ENCODE measurements at regions of chr13 and their contacts with region 1.

Region 1: GRCh38 chr13:51452361-51453206 is at the start of gene INTS6:
- DNase-seq: peak; percentile 73 to 100 (median 99)
- ATAC-seq: peak; percentile 83
- H3K4me3 ChIP-seq: peak within 1 kb of the TSS; percentile 88
- H3K4me3 Mint-ChIP-seq: peak within 1 kb of the TSS; percentile 96
- H3K27ac ChIP-seq: peak within 1 kb of the TSS; percentile 88 to 97
- H3K27ac Mint-ChIP-seq: peak within 1 kb of the TSS; percentile 95
- H3K4me1 ChIP-seq: peaks cover 30% of the 10 kb centered on the region
- H3K4me1 Mint-ChIP-seq: peaks cover 59% of the 10 kb centered on the region
- H3K27me3 ChIP-seq: no peaks in the 10 kb centered on the region
- H3K27me3 Mint-ChIP-seq: no peaks in the 10 kb centered on the region
- CTCF ChIP-seq: no peak
- total RNA-seq, gene INTS6: 40.8 to 45.8 TPM

Region 2: GRCh38 chr13:49996951-49997895 is 1455.4 kb before region 1 on chr13 and contains the start of gene TRIM13:
- CTCF ChIA-PET with region 1: no interaction called
- POLR2A ChIA-PET with region 1: interaction called, 3 read pairs
- intact Hi-C with region 1: loop called in 1 of 2 experiments (anchors 10 kb)
- DNase-seq: peak; percentile 72 to 91 (median 80)
- ATAC-seq: peak; percentile 83
- H3K4me3 ChIP-seq: peak within 1 kb of the TSS; percentile 96
- H3K4me3 Mint-ChIP-seq: peak within 1 kb of the TSS; percentile 97
- H3K27ac ChIP-seq: peak within 1 kb of the TSS; percentile 91
- H3K27ac Mint-ChIP-seq: peak within 1 kb of the TSS; percentile 90
- H3K4me1 ChIP-seq: peaks cover 32% of the 10 kb centered on the region
- H3K4me1 Mint-ChIP-seq: peaks cover 56% of the 10 kb centered on the region
- H3K27me3 ChIP-seq: no peaks in the 10 kb centered on the region
- H3K27me3 Mint-ChIP-seq: no peaks in the 10 kb centered on the region
- CTCF ChIP-seq: peak; percentile 95
- total RNA-seq, gene TRIM13: 32.5 to 32.9 TPM

Region 3: DNA sequence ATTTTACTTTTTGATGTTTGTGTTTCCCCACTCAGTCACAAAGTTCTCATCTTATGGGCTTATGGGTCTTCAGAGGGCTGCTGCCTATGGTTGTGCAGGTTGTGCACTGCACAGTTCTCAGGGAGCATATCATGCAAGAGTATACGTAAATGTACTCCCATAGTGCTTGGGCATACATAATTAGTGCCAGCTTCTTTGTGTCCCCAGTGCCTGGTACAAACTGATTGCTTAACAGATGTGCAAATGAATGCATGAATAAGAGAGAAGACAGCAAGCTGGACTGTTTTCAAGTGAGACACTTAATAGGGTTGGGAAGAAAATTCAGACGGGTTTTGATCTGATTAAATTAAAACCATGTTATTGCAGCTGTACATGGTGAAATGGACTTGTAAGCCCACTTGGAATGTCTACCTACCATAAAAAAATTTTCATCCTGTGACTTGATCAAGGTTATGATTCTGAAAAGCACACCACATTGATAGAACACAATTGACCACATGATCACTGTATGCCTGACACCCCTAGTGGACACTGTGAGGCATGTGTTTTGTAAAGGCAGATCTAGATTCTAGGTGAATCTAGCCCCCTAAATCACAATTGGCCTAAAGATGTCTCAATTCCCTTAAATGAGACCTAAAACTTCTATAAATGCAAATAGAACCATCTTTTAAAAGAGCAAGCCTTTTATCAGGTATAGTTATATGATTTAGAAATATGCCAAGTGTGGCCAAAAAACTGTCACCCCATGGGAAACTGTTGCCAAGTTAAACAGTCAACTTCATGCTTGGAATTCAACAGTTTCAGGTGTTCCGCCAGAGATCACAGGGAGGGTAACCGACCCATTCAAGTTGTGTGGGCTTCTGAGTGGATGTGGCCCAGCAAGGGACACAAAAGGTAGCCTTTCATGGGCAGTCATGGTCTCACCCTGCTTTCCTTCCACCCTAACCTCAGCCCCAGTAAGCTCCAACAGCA is 202.5 kb before region 1 on chr13:
- CTCF ChIA-PET with region 1: no interaction called
- POLR2A ChIA-PET with region 1: no interaction called
- intact Hi-C with region 1: no loop called
- DNase-seq: no peak
- ATAC-seq: no peak
- H3K4me3 ChIP-seq: no peak overlapping the region
- H3K4me3 Mint-ChIP-seq: no peak overlapping the region
- H3K27ac ChIP-seq: no peak overlapping the region
- H3K27ac Mint-ChIP-seq: no peak overlapping the region
- H3K4me1 ChIP-seq: no peaks in the 10 kb centered on the region
- H3K4me1 Mint-ChIP-seq: no peaks in the 10 kb centered on the region
- H3K27me3 ChIP-seq: peaks cover 0 to 5% of the 10 kb centered on the region in 2 experiments
- H3K27me3 Mint-ChIP-seq: no peaks in the 10 kb centered on the region
- CTCF ChIP-seq: no peak

Region 4: DNA sequence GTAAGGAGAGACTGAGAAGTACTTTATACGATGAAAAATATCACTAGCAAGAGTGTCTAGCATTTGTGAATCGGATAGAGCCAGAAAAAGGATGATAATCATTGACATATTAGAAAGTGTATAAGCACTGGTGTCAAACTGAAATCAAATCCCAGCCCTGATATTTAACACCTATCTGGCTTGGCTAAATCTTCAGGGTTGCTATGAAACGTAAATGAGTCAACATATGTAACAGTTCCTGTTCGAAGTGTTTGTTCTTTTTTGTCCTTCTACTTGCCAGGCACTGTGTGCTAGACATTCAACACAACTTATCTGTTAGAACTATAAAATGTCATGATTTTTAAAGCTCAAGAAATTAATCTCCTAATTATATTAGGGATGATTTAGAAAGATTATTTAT is 72.3 kb before region 1 on chr13:
- CTCF ChIA-PET with region 1: no interaction called
- POLR2A ChIA-PET with region 1: no interaction called
- intact Hi-C with region 1: no loop called
- DNase-seq: no peak
- ATAC-seq: no peak
- H3K4me3 ChIP-seq: no peak overlapping the region
- H3K4me3 Mint-ChIP-seq: no peak overlapping the region
- H3K27ac ChIP-seq: no peak overlapping the region
- H3K27ac Mint-ChIP-seq: no peak overlapping the region
- H3K4me1 ChIP-seq: no peaks in the 10 kb centered on the region
- H3K4me1 Mint-ChIP-seq: no peaks in the 10 kb centered on the region
- H3K27me3 ChIP-seq: no peaks in the 10 kb centered on the region
- H3K27me3 Mint-ChIP-seq: no peaks in the 10 kb centered on the region
- CTCF ChIP-seq: no peak

Region 5: GRCh38 chr13:51435002-51435578 is 17.5 kb before region 1 on chr13:
- CTCF ChIA-PET with region 1: interaction called, 4 read pairs
- POLR2A ChIA-PET with region 1: interaction called, 56 read pairs
- intact Hi-C with region 1: no loop called
- DNase-seq: peak in 3 of 14 experiments; percentile 47 to 58 (median 54)
- ATAC-seq: peak; percentile 56
- H3K4me3 ChIP-seq: no peak overlapping the region
- H3K4me3 Mint-ChIP-seq: no peak overlapping the region
- H3K27ac ChIP-seq: no peak overlapping the region
- H3K27ac Mint-ChIP-seq: no peak overlapping the region
- H3K4me1 ChIP-seq: no peaks in the 10 kb centered on the region
- H3K4me1 Mint-ChIP-seq: peaks cover 45% of the 10 kb centered on the region
- H3K27me3 ChIP-seq: no peaks in the 10 kb centered on the region
- H3K27me3 Mint-ChIP-seq: no peaks in the 10 kb centered on the region
- CTCF ChIP-seq: peak; percentile 67

Region 6: DNA sequence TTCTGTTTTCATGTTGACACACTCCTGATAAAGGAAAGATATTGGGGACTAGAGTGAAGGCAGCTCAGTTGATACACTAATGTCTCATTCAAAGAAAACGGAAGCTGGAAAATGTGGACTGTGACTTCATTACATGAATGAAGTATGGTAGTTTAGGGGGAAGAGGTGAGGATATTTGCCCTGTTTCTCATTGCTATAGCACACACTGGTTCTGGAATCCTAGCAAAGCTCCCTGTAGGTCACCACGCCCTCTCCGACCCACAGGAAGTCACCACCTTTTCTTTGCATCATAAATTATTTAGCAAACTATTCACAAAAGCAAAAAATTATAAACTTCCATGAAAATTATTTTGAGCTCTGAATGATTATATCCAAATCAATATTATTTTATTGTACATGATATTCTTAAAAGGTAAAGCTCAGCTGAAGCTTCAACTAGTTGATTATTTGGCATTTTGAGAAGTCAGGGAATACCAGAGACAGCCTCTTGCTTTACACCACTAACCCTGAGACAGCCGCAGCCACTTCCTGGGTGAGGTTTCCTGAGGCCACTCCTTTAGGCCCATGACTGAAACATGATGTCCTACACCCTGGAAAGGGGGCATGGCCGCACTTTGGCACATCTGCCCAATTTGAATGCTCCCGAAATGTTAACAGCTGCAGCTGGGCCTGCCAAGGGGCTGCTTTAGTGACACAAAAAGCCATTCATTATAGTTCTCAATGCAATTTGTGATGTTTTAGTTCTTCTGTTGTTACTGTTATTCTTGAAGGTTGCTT is 81.6 kb after region 1 on chr13:
- CTCF ChIA-PET with region 1: no interaction called
- POLR2A ChIA-PET with region 1: interaction called, 43 read pairs
- intact Hi-C with region 1: no loop called
- DNase-seq: peak in 13 of 14 experiments; percentile 3 to 78 (median 27)
- ATAC-seq: peak; percentile 55
- H3K4me3 ChIP-seq: no peak overlapping the region
- H3K4me3 Mint-ChIP-seq: peak overlapping the region; percentile 61
- H3K27ac ChIP-seq: peak overlapping the region in 1 of 2 donors; percentile 25
- H3K27ac Mint-ChIP-seq: peak overlapping the region; percentile 81
- H3K4me1 ChIP-seq: peaks cover 21% of the 10 kb centered on the region
- H3K4me1 Mint-ChIP-seq: peaks cover 28% of the 10 kb centered on the region
- H3K27me3 ChIP-seq: no peaks in the 10 kb centered on the region
- H3K27me3 Mint-ChIP-seq: no peaks in the 10 kb centered on the region
- CTCF ChIP-seq: no peak

Region 7: GRCh38 chr13:51645154-51645650 is 192.6 kb after region 1 on chr13:
- CTCF ChIA-PET with region 1: no interaction called
- POLR2A ChIA-PET with region 1: interaction called, 33 read pairs
- intact Hi-C with region 1: loop called in 1 of 2 experiments (anchors 2 kb)
- DNase-seq: peak in 6 of 14 experiments; percentile 17 to 87 (median 68)
- ATAC-seq: peak; percentile 87
- H3K4me3 ChIP-seq: peak overlapping the region; percentile 12
- H3K4me3 Mint-ChIP-seq: peak overlapping the region; percentile 82
- H3K27ac ChIP-seq: peak overlapping the region; percentile 54 to 95
- H3K27ac Mint-ChIP-seq: peak overlapping the region; percentile 95
- H3K4me1 ChIP-seq: peaks cover 44% of the 10 kb centered on the region
- H3K4me1 Mint-ChIP-seq: peaks cover 55% of the 10 kb centered on the region
- H3K27me3 ChIP-seq: no peaks in the 10 kb centered on the region
- H3K27me3 Mint-ChIP-seq: no peaks in the 10 kb centered on the region
- CTCF ChIP-seq: no peak

Region 8: GRCh38 chr13:51814825-51815650 is 362.5 kb after region 1 on chr13:
- CTCF ChIA-PET with region 1: interaction called, 4 read pairs
- POLR2A ChIA-PET with region 1: interaction called, 153 read pairs
- intact Hi-C with region 1: no loop called
- DNase-seq: peak; percentile 56 to 88 (median 68)
- ATAC-seq: peak; percentile 80
- H3K4me3 ChIP-seq: peak overlapping the region; percentile 13
- H3K4me3 Mint-ChIP-seq: peak overlapping the region; percentile 77
- H3K27ac ChIP-seq: peak overlapping the region in 1 of 2 donors; percentile 23
- H3K27ac Mint-ChIP-seq: peak overlapping the region; percentile 89
- H3K4me1 ChIP-seq: peaks cover 79% of the 10 kb centered on the region
- H3K4me1 Mint-ChIP-seq: peaks cover 84% of the 10 kb centered on the region
- H3K27me3 ChIP-seq: no peaks in the 10 kb centered on the region
- H3K27me3 Mint-ChIP-seq: no peaks in the 10 kb centered on the region
- CTCF ChIP-seq: peak; percentile 89

Region 9: DNA sequence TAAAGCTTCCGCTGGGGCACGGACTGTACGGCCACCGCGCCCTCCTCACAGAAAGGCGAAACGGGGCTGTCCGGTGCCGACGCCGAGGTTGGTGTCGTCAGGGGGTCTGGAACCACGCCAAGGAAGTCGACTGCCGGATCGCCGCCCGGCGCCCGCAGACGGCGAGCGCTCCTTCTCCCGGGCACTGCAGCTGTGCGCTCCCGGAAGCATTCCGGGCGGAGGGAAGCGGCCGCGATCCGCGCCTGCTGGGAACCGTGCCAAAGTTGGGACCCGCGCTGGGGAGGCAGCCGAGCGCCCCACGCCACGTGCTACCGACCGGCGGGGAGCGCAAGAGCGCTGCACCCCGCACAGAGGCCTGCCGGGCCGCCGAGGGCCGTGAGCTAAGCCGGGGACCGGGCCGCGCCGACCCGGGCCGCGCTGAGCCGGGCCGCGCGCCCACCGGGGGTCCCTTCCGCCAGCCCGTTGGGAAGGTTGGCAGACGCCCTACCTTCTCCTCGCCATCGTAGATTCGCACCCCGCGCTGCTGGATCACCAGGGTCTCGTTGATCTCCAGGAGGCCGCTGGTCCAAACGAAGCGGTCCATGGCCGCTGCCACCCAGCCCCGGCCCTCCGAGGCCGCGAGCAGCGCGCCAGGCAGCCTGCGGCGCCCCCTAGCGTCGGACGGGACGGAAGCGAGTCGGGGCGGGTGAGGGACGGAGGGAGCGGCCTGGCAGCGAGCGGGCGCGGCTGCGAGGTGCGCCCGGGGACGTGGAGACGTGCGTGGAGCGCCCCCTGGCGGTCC is 997.6 kb after region 1 on chr13 and contains the start of gene VPS36:
- CTCF ChIA-PET with region 1: no interaction called
- POLR2A ChIA-PET with region 1: interaction called, 4 read pairs
- intact Hi-C with region 1: loop called (anchors 10 kb)
- DNase-seq: peak; percentile 88 to 99 (median 94)
- ATAC-seq: peak; percentile 58
- H3K4me3 ChIP-seq: peak within 1 kb of the TSS; percentile 74
- H3K4me3 Mint-ChIP-seq: peak within 1 kb of the TSS; percentile 94
- H3K27ac ChIP-seq: peak within 1 kb of the TSS; percentile 4 to 43
- H3K27ac Mint-ChIP-seq: peak within 1 kb of the TSS; percentile 79
- H3K4me1 ChIP-seq: peaks cover 25% of the 10 kb centered on the region
- H3K4me1 Mint-ChIP-seq: peaks cover 55% of the 10 kb centered on the region
- H3K27me3 ChIP-seq: no peaks in the 10 kb centered on the region
- H3K27me3 Mint-ChIP-seq: no peaks in the 10 kb centered on the region
- CTCF ChIP-seq: peak; percentile 98
- total RNA-seq, gene VPS36: 29.9 to 31.0 TPM

Measured in CD4-positive, alpha-beta T cell (primary cell).